Naive thymus-derived CD4-positive, alpha-beta T cell (primary cell): ENCODE measurements at regions of chr5 and their contacts with region 1.

Region 1: GRCh38 chr5:102536323-102536928 is 37.6 kb upstream of the SLCO6A1 start:
- DNase-seq: peak in 1 of 9 donors; percentile 1
- ATAC-seq: no peak
- H3K4me3 ChIP-seq: no peak overlapping the region
- H3K4me3 Mint-ChIP-seq: no peak overlapping the region
- H3K27ac ChIP-seq: no peak overlapping the region
- H3K27ac Mint-ChIP-seq: no peak overlapping the region
- H3K4me1 ChIP-seq: no peaks in the 10 kb centered on the region
- H3K4me1 Mint-ChIP-seq: no peaks in the 10 kb centered on the region
- H3K27me3 ChIP-seq: no peaks in the 10 kb centered on the region
- H3K27me3 Mint-ChIP-seq: peaks cover 0 to 14% (median 5%) of the 10 kb centered on the region in 5 donors

Region 2: DNA sequence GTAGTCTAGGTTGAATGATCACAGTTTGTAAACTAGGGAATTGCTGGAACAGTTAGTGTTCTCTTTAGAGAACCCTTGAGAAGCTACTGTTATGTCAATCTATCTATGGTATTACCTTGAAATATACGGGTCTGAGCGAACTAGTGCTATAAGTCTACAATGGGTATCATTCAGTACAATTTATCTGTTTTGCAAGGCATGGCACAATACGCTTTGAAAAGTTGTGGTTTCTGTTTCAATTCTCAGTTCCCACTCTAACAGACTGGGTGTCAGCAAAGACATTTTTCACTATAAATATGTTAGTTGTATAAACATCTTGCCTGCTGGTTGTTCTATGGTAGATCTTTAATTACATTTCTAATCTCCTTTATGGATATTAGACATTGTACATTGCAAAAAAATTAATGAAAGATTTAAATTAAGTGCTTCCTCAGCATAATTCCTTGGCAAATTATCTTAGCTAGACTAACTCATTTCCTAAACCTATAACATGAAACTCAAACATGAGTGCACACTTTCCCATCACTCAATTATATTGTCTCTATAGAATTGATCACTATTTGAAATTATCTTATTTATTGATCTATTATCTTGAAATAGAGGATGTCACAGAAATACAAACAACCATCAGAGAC is 12.8 kb before region 1 on chr5:
- CTCF ChIA-PET with region 1: no interaction called
- POLR2A ChIA-PET with region 1: interaction called, 5 read pairs
- intact Hi-C with region 1: loop called in 1 of 2 experiments (anchors 1 kb)
- DNase-seq: no peak
- ATAC-seq: no peak
- H3K4me3 ChIP-seq: no peak overlapping the region
- H3K4me3 Mint-ChIP-seq: no peak overlapping the region
- H3K27ac ChIP-seq: no peak overlapping the region
- H3K27ac Mint-ChIP-seq: no peak overlapping the region
- H3K4me1 ChIP-seq: no peaks in the 10 kb centered on the region
- H3K4me1 Mint-ChIP-seq: peaks cover 0 to 7% (median 0%) of the 10 kb centered on the region in 7 donors
- H3K27me3 ChIP-seq: no peaks in the 10 kb centered on the region
- H3K27me3 Mint-ChIP-seq: peaks cover 0 to 17% (median 2%) of the 10 kb centered on the region in 5 donors

Region 3: DNA sequence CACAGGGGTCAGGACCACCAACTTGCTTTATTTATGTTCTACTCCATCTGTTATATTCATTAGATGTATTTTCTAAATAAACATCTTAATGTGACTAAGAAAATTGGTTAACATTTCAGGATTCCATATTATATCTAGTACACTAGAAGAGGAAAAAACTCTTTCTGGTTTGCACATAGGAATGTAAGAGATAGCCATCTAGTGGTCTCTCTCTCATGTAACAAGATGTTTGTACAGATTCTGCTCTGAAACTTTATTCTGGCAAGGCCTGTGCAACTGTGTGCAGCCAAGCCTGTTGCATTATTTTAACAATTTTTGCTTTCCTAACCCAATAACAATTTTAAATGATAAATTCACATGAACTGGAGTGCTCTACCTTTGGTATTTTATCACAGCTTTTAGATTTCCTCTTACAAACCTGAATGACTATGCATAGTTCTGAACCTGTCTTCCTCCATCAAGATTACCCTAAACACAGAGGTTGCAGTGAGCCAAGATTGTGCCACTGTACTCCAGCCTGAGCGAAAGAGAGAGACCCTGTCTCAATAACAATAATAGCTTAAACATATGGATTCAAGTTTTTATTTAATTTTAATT is 435.4 kb after region 1 on chr5:
- CTCF ChIA-PET with region 1: no interaction called
- POLR2A ChIA-PET with region 1: no interaction called
- intact Hi-C with region 1: loop called in 1 of 2 experiments (anchors 5 kb)
- DNase-seq: peak in 1 of 9 donors; percentile 9
- ATAC-seq: no peak
- H3K4me3 ChIP-seq: no peak overlapping the region
- H3K4me3 Mint-ChIP-seq: no peak overlapping the region
- H3K27ac ChIP-seq: no peak overlapping the region
- H3K27ac Mint-ChIP-seq: no peak overlapping the region
- H3K4me1 ChIP-seq: no peaks in the 10 kb centered on the region
- H3K4me1 Mint-ChIP-seq: peaks cover 0 to 5% (median 0%) of the 10 kb centered on the region in 7 donors
- H3K27me3 ChIP-seq: no peaks in the 10 kb centered on the region
- H3K27me3 Mint-ChIP-seq: no peaks in the 10 kb centered on the region

Region 4: GRCh38 chr5:103041071-103041676 is 504.7 kb after region 1 on chr5:
- CTCF ChIA-PET with region 1: no interaction called
- POLR2A ChIA-PET with region 1: no interaction called
- intact Hi-C with region 1: loop called in 1 of 2 experiments (anchors 1 kb)
- DNase-seq: peak in 5 of 9 donors; percentile 3 to 24 (median 11)
- ATAC-seq: no peak
- H3K4me3 ChIP-seq: no peak overlapping the region
- H3K4me3 Mint-ChIP-seq: no peak overlapping the region
- H3K27ac ChIP-seq: no peak overlapping the region
- H3K27ac Mint-ChIP-seq: no peak overlapping the region
- H3K4me1 ChIP-seq: no peaks in the 10 kb centered on the region
- H3K4me1 Mint-ChIP-seq: no peaks in the 10 kb centered on the region
- H3K27me3 ChIP-seq: no peaks in the 10 kb centered on the region
- H3K27me3 Mint-ChIP-seq: peaks cover 3 to 39% (median 13%) of the 10 kb centered on the region in 5 donors

Region 5: GRCh38 chr5:103224118-103224893 is 687.9 kb after region 1 on chr5:
- CTCF ChIA-PET with region 1: interaction called, 3 read pairs
- POLR2A ChIA-PET with region 1: no interaction called
- intact Hi-C with region 1: loop called in 1 of 2 experiments (anchors 1 kb)
- DNase-seq: peak in 8 of 9 donors; percentile 10 to 60 (median 38)
- ATAC-seq: peak; percentile 97
- H3K4me3 ChIP-seq: no peak overlapping the region
- H3K4me3 Mint-ChIP-seq: peak overlapping the region in 1 of 10 donors; percentile 21
- H3K27ac ChIP-seq: no peak overlapping the region
- H3K27ac Mint-ChIP-seq: no peak overlapping the region
- H3K4me1 ChIP-seq: no peaks in the 10 kb centered on the region
- H3K4me1 Mint-ChIP-seq: peaks cover 0 to 5% (median 0%) of the 10 kb centered on the region in 7 donors
- H3K27me3 ChIP-seq: peaks cover 0 to 4% of the 10 kb centered on the region in 2 donors
- H3K27me3 Mint-ChIP-seq: peaks cover 11 to 46% (median 27%) of the 10 kb centered on the region in 5 donors